WTC11 (cell line): ENCODE measurements at regions of chr2 and their contacts with region 1.

Region 1: DNA sequence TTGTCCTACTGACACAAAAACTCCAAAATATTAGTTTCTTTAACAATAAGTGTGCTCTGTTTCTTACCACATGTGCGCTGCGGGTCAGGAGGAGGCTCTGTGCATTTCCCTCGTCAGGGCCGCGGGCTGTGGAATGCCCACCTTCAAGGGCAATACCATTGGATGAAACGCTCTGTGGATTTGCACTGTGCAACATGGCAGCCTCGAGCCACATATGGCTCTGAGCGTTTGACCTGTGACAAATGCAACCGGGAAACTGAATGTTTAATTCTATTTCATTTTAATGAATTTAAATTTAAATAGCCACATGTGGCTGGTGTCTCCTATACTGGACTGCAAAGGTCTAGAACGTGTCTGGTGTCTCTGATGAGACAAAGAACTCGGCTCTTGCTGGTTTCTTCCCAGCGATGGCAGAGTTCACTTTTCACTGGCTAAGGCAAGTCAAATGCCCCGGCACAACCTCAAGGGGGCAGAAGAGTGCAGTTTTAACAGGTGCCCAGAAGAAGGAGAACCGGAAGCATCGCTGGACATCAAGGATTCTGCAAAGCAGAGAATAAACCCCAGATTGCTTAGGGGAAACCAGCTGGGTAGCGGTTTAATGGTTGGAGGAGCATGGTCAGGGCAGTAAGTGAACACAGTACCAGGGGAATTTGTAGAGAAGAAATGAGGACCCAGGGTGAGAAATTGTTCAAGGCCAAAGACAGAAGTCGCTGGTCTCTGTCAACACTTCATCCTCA is 37.0 kb upstream of the TMEM18 start:
- DNase-seq: peak; percentile 69
- ATAC-seq: peak; percentile 76
- H3K4me3 Mint-ChIP-seq: no peak overlapping the region
- H3K27ac Mint-ChIP-seq: no peak overlapping the region
- H3K4me1 Mint-ChIP-seq: peaks cover 20% of the 10 kb centered on the region
- H3K27me3 Mint-ChIP-seq: peaks cover 3% of the 10 kb centered on the region; the same call in 1 of the 2 replicates
- CTCF ChIP-seq: peak; percentile 59

Region 2: DNA sequence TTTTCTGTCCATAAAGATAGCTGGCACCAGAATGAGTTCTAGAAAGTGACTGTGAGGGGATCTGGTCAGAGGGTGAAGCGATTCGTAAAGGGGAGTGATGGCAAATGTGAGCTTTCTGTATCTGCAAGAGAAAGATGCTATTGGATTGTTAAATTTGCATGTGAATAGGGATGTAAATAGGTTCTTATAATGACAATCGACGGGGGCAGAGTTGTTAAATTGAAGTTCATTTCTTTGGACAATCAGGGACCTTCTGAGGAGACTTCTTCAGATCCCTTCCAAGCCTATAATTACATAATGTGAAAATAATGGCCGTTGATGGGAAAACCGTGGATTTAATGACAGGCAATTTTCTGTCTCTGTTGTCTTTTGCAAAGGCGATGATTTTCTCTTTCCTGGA is 15.2 kb after region 1 on chr2:
- CTCF ChIA-PET with region 1: interaction called, 18 read pairs
- POLR2A ChIA-PET with region 1: no interaction called
- DNase-seq: no peak
- ATAC-seq: peak; percentile 86
- H3K4me3 Mint-ChIP-seq: peak overlapping the region; percentile 38
- H3K27ac Mint-ChIP-seq: peak overlapping the region; percentile 99
- H3K4me1 Mint-ChIP-seq: peaks cover 68% of the 10 kb centered on the region
- H3K27me3 Mint-ChIP-seq: peaks cover 3% of the 10 kb centered on the region
- CTCF ChIP-seq: no peak

Region 3: GRCh38 chr2:741195-741496 is 27.0 kb after region 1 on chr2:
- CTCF ChIA-PET with region 1: interaction called, 24 read pairs
- POLR2A ChIA-PET with region 1: interaction called, 6 read pairs
- DNase-seq: no peak
- ATAC-seq: no peak
- H3K4me3 Mint-ChIP-seq: peak overlapping the region; percentile 80
- H3K27ac Mint-ChIP-seq: peak overlapping the region; percentile 94
- H3K4me1 Mint-ChIP-seq: peaks cover 35% of the 10 kb centered on the region
- H3K27me3 Mint-ChIP-seq: no peaks in the 10 kb centered on the region; the same call in 1 of the 2 replicates
- CTCF ChIP-seq: no peak

Region 4: GRCh38 chr2:860259-860855 is 146.2 kb after region 1 on chr2:
- CTCF ChIA-PET with region 1: interaction called, 26 read pairs
- POLR2A ChIA-PET with region 1: no interaction called
- DNase-seq: peak; percentile 39
- ATAC-seq: peak; percentile 69
- H3K4me3 Mint-ChIP-seq: no peak overlapping the region
- H3K27ac Mint-ChIP-seq: no peak overlapping the region
- H3K4me1 Mint-ChIP-seq: peaks cover 28% of the 10 kb centered on the region
- H3K27me3 Mint-ChIP-seq: peaks cover 25% of the 10 kb centered on the region
- CTCF ChIP-seq: no peak

Region 5: DNA sequence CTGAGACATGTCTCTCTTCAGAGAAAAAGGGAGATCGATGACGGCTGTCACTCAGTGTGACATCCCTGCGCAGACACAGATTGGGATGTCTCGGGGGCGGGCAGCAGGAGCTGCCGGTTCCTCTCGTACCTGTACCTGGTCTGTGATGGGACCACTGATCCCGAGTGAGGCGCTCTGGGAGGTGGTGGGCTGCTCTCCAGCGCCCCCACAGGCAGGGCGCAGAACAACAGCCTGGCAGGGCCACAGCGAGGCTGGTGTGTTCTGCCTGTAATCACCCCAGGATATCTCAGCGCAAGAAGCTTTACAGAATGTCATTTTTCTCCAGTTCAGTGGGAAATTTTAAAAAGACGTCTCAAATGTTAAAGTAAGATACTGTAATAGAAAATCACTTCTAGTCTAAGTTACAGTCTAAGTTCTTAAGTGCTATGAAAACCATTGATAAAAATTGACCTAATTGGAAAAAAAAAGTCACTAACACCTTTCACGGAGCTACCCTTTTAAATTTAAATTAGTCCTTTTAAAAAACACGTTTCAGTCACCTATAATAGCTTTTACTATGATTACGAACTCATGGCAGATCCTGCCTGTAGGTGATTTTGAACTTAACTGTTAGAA is 426.3 kb after region 1 on chr2:
- CTCF ChIA-PET with region 1: interaction called, 10 read pairs
- POLR2A ChIA-PET with region 1: no interaction called
- DNase-seq: peak; percentile 84
- ATAC-seq: peak; percentile 98
- H3K4me3 Mint-ChIP-seq: no peak overlapping the region
- H3K27ac Mint-ChIP-seq: peak overlapping the region; percentile 9; the same call in 1 of the 2 replicates
- H3K4me1 Mint-ChIP-seq: peaks cover 2% of the 10 kb centered on the region; the same call in 1 of the 2 replicates
- H3K27me3 Mint-ChIP-seq: no peaks in the 10 kb centered on the region
- CTCF ChIP-seq: peak; percentile 99